Heart left ventricle (tissue), 16 donors: ENCODE measurements at regions of chr1 and their contacts with region 1.

Region 1: GRCh38 chr1:32072622-32073298 is at the start of gene TMEM39B:
- DNase-seq: peak; percentile 96 to 98 (median 97)
- ATAC-seq: peak; percentile 88 to 96 (median 96)
- H3K4me3 ChIP-seq: peak within 1 kb of the TSS; percentile 48 to 86 (median 79)
- H3K27ac ChIP-seq: peak within 1 kb of the TSS; percentile 79 to 98 (median 94)
- H3K4me1 ChIP-seq: peaks cover 0 to 52% (median 16%) of the 10 kb centered on the region in 12 donors
- H3K27me3 ChIP-seq: no peaks in the 10 kb centered on the region
- CTCF ChIP-seq: peak in 2 of 12 donors; percentile 4 to 24
- POLR2A ChIP-seq: peak in 1 of 2 donors; percentile 51
- total RNA-seq, gene TMEM39B: 2.7 to 15.1 (median 6.3) TPM

Region 2: GRCh38 chr1:32107742-32108661 is 35.2 kb after region 1 on chr1 and contains the start of gene KPNA6:
- intact Hi-C with region 1: loop called in 2 of 10 experiments (anchors 1 to 2 kb)
- DNase-seq: peak; percentile 90 to 95 (median 92)
- ATAC-seq: peak; percentile 89 to 95 (median 90)
- H3K4me3 ChIP-seq: peak within 1 kb of the TSS; percentile 70 to 100 (median 89)
- H3K27ac ChIP-seq: peak within 1 kb of the TSS; percentile 82 to 94 (median 90)
- H3K4me1 ChIP-seq: peaks cover 12 to 50% (median 39%) of the 10 kb centered on the region in 12 donors
- H3K27me3 ChIP-seq: no peaks in the 10 kb centered on the region
- CTCF ChIP-seq: no peak
- POLR2A ChIP-seq: peak in 1 of 2 donors; percentile 29
- total RNA-seq, gene KPNA6: 58.4 to 99.2 (median 78.6) TPM